ENCODE measurements at regions of chr9 and their contacts with region 1.

Region 1: GRCh38 chr9:122807271-122807930 is 7.5 kb downstream of the OR1K1 start:
- DNase-seq: no peak
- H3K4me3 ChIP-seq: no peak overlapping the region
- H3K27ac ChIP-seq: no peak overlapping the region
- H3K4me1 ChIP-seq: peaks cover 0 to 4% (median 0%) of the 10 kb centered on the region in 3 donors
- H3K27me3 ChIP-seq: no peaks in the 10 kb centered on the region
- CTCF ChIP-seq: no peak

Region 2: GRCh38 chr9:122464633-122465567 is 342.5 kb before region 1 on chr9:
- intact Hi-C with region 1: loop called (anchors 10 kb)
- DNase-seq: peak in 4 of 5 donors; percentile 57 to 89 (median 80)
- H3K4me3 ChIP-seq: peak overlapping the region; percentile 32 to 80 (median 66)
- H3K27ac ChIP-seq: no peak overlapping the region
- H3K4me1 ChIP-seq: peaks cover 0 to 3% (median 0%) of the 10 kb centered on the region in 3 donors
- H3K27me3 ChIP-seq: no peaks in the 10 kb centered on the region
- CTCF ChIP-seq: peak; percentile 86

Region 3: DNA sequence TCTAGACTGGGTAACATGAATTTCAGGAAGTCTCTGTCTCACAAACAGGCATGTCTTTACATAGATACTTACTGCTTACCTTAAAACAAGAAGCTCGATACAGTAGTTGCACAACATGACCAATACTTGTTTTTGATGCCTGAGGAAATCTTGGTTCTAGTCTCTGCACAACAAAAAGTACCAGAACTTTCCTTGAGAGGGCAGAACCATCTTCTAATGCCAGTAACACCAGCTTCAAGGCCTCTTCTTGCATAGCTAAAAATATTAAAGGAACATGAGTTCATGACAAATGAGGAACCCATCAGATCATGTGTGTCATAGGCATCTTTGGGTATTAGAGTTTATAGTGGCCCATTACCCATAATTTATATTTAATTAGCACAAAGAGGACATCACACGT is 75.7 kb after region 1 on chr9:
- intact Hi-C with region 1: no loop called
- DNase-seq: no peak
- H3K4me3 ChIP-seq: no peak overlapping the region
- H3K27ac ChIP-seq: no peak overlapping the region
- H3K4me1 ChIP-seq: no peaks in the 10 kb centered on the region
- H3K27me3 ChIP-seq: no peaks in the 10 kb centered on the region
- CTCF ChIP-seq: no peak

Region 4: GRCh38 chr9:122923947-122924346 is 116.5 kb after region 1 on chr9:
- intact Hi-C with region 1: no loop called
- DNase-seq: no peak
- H3K4me3 ChIP-seq: no peak overlapping the region
- H3K27ac ChIP-seq: no peak overlapping the region
- H3K4me1 ChIP-seq: no peaks in the 10 kb centered on the region
- H3K27me3 ChIP-seq: no peaks in the 10 kb centered on the region
- CTCF ChIP-seq: no peak

Region 5: DNA sequence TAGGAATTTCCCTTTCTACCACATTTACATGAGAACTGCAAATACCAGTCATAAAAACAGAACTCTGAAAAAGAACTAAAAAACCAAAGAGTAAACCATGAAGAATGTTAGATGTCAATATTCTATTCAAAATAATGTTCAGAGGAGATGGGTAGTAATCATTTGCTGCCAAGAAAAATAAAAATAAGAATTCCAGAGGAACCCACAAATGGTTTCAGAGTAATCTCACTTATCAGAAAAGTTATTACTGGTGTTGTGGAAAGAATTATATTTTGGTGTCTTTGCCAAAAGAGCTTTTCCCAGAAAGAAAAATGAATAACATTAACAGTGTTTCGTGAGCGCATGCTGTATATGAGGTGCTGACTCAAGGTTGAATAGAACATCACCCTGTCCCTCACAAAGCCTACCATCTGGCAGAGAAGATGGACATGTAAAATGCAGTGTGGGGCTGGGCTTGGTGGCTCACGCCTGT is 261.6 kb after region 1 on chr9:
- intact Hi-C with region 1: no loop called
- DNase-seq: peak in 1 of 5 donors; percentile 35
- H3K4me3 ChIP-seq: no peak overlapping the region
- H3K27ac ChIP-seq: no peak overlapping the region
- H3K4me1 ChIP-seq: peaks cover 0 to 4% (median 0%) of the 10 kb centered on the region in 3 donors
- H3K27me3 ChIP-seq: no peaks in the 10 kb centered on the region
- CTCF ChIP-seq: no peak

Measured in kidney (tissue), 22 donors.